ENCODE measurements at regions of chr9 and their contacts with region 1.

Region 1: GRCh38 chr9:20144197-20144596 is 355.4 kb upstream of the SLC24A2 start:
- DNase-seq: peak; percentile 11
- ATAC-seq: no peak
- H3K4me3 Mint-ChIP-seq: no peak overlapping the region
- H3K27ac Mint-ChIP-seq: no peak overlapping the region
- H3K4me1 Mint-ChIP-seq: peaks cover 2% of the 10 kb centered on the region
- H3K27me3 Mint-ChIP-seq: peaks cover 8% of the 10 kb centered on the region

Region 2: DNA sequence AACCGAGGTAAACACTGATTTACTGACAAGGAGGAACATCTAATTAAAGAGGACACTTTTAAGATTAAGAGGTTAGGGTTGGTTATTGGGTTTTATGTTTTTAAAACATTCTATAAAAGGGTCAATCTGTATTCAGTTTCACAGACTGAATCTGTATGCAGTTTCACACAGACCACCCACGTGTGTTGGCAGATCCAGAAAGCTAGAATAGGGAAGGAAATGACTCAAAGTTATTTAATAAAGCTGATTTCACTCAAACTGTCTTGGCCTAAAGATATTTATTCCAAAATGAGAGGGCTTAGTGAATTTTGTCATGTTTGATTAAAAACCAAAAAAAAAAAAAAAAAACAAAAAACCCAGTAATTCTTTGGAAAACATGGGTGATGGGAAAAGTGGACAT is 495.5 kb before region 1 on chr9:
- CTCF ChIA-PET with region 1: no interaction called
- POLR2A ChIA-PET with region 1: no interaction called
- intact Hi-C with region 1: no loop called
- DNase-seq: no peak
- ATAC-seq: no peak
- H3K4me3 Mint-ChIP-seq: no peak overlapping the region
- H3K27ac Mint-ChIP-seq: no peak overlapping the region
- H3K4me1 Mint-ChIP-seq: no peaks in the 10 kb centered on the region
- H3K27me3 Mint-ChIP-seq: peaks cover 12% of the 10 kb centered on the region

Region 3: DNA sequence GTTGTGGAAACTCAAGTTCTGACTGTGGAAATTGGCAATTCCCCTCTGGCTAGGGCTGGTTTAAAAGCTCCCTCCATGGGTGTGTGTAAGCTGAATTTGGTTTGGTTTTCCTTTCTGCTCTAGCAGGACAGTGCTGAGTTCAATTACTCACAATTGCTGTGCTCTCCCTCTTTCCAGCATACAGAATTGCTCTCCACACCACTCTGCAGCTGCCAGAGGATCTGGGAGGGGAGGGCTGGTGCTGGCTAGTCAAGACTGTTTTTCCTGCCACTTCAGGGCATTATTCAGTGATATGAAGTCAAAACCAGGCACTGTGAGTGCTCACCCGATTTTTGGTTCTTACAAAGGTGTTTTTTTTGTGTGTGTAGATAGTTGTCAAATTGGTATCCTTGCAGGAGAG is 18.5 kb before region 1 on chr9:
- CTCF ChIA-PET with region 1: interaction called, 3 read pairs
- POLR2A ChIA-PET with region 1: no interaction called
- intact Hi-C with region 1: loop called in 1 of 2 experiments (anchors 2 kb)
- DNase-seq: no peak
- ATAC-seq: no peak
- H3K4me3 Mint-ChIP-seq: no peak overlapping the region
- H3K27ac Mint-ChIP-seq: no peak overlapping the region
- H3K4me1 Mint-ChIP-seq: no peaks in the 10 kb centered on the region
- H3K27me3 Mint-ChIP-seq: peaks cover 2% of the 10 kb centered on the region

Measured in activated CD4-positive, alpha-beta T cell treated with anti-CD3 and anti-CD28 coated beads for 36 hours (primary cell).